ENCODE measurements at regions of chr1 and their contacts with region 1.

Region 1: DNA sequence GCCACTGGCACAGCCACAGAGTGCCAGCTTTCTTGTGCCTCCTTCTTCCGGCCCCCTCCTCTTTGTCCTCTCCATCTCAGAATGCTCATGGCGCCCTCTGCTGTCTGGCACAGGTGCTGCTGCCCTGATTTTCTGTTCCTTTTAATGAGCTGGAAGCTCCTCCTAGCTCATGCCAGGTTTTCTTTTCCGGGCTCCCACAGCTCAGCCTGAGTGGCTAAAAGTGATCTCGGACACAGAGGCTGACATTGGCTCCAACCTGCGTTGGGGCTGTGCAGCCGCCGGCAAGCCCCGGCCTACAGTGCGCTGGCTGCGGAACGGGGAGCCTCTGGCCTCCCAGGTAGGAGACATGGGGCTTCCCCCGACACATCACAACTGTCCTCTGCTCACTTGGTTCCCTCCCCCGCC is 18.7 kb downstream of the CNTN2 start:
- DNase-seq: peak; percentile 82
- H3K4me3 Mint-ChIP-seq: no peak overlapping the region
- H3K27ac Mint-ChIP-seq: no peak overlapping the region
- H3K4me1 Mint-ChIP-seq: no peaks in the 10 kb centered on the region
- H3K27me3 Mint-ChIP-seq: no peaks in the 10 kb centered on the region

Region 2: GRCh38 chr1:204975570-204976235 is 86.0 kb before region 1 on chr1:
- CTCF ChIA-PET with region 1: interaction called, 80 read pairs
- POLR2A ChIA-PET with region 1: no interaction called
- intact Hi-C with region 1: no loop called
- DNase-seq: peak; percentile 61
- H3K4me3 Mint-ChIP-seq: no peak overlapping the region
- H3K27ac Mint-ChIP-seq: no peak overlapping the region
- H3K4me1 Mint-ChIP-seq: no peaks in the 10 kb centered on the region
- H3K27me3 Mint-ChIP-seq: peaks cover 5% of the 10 kb centered on the region

Region 3: DNA sequence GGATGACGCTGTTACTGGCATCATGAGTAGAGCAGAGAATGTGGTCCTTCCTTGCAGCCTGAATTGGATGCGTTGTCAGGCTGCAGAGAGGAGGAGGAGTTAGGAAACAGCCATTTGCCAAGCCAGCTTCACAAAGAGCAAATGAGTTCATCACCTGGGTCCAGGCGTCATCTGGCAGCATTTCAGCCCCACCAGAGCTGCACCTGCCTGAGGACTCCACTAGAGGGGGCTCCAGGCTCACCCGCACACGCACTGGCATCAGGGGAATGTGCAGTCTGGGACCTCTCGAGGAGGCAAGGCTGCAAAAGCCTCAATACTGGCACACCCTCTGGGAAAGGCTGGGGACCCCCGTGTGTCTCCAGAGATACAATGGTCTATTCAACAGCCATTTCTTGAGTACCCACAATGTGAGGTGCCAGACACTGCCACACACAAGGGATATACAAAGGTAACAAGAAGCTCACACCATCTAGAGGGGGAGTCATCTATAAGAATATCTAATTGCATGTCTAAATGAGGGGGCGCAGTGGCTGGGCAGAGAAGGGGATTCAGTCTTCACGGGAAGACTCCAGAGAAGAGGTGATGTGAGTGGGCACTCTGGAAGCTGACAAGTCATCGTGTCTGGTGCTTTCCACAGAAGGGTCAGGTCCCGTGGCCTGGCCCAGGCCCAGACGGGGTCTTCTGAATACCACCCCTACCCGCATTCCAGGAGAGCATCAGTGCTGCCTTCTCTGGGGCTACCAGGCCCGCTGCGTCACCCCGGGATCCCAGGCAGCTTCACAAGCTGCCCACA is 72.2 kb before region 1 on chr1:
- CTCF ChIA-PET with region 1: interaction called, 107 read pairs
- POLR2A ChIA-PET with region 1: no interaction called
- intact Hi-C with region 1: loop called (anchors 1 kb)
- DNase-seq: peak; percentile 75
- H3K4me3 Mint-ChIP-seq: no peak overlapping the region
- H3K27ac Mint-ChIP-seq: no peak overlapping the region
- H3K4me1 Mint-ChIP-seq: peaks cover 7% of the 10 kb centered on the region
- H3K27me3 Mint-ChIP-seq: peaks cover 2% of the 10 kb centered on the region

Region 4: DNA sequence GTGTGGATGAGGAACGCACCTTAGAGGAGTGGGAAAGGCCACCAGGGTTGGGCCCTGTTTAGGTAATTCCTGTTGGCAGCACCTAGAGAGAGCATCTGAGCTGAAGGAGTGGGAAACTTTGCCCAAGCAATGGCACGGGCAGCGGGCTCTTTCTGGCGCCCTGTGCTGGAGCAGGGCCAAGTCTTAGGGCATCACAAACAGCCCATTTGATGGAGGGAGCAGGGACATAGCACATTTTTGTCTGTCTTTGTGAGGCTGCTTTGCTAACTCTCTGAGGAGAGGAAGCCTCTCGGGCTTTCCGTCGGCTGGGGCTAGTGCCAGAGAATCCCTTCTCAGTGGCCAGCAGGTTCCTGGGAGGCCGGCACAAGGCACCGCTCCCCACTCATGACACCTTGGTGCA is 41.2 kb before region 1 on chr1:
- CTCF ChIA-PET with region 1: interaction called, 15 read pairs
- POLR2A ChIA-PET with region 1: no interaction called
- intact Hi-C with region 1: no loop called
- DNase-seq: no peak
- H3K4me3 Mint-ChIP-seq: no peak overlapping the region
- H3K27ac Mint-ChIP-seq: no peak overlapping the region
- H3K4me1 Mint-ChIP-seq: no peaks in the 10 kb centered on the region
- H3K27me3 Mint-ChIP-seq: peaks cover 2% of the 10 kb centered on the region

Region 5: DNA sequence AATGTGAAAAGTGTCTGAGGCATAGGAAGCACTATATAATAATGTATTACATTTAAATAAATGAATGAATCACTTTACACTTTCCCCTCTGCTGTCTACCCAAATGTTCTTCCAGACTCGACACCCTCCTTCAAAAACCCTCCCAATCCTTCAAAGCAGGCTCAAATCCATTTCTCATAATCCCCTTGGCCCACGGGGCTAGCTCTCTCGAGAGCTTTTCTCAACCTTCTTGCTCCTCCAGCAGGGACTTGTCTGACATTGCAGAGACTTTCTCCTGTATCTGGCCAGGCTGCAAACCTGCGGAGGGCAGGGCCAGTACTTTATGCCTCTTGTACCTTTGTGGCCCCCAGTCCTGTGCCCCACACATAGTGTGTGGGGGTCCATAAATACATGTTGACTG is 32.7 kb before region 1 on chr1:
- CTCF ChIA-PET with region 1: interaction called, 12 read pairs
- POLR2A ChIA-PET with region 1: no interaction called
- intact Hi-C with region 1: no loop called
- DNase-seq: no peak
- H3K4me3 Mint-ChIP-seq: no peak overlapping the region
- H3K27ac Mint-ChIP-seq: no peak overlapping the region
- H3K4me1 Mint-ChIP-seq: no peaks in the 10 kb centered on the region
- H3K27me3 Mint-ChIP-seq: peaks cover 4% of the 10 kb centered on the region

Region 6: GRCh38 chr1:205048382-205048781 is 13.3 kb before region 1 on chr1:
- CTCF ChIA-PET with region 1: interaction called, 14 read pairs
- POLR2A ChIA-PET with region 1: no interaction called
- intact Hi-C with region 1: no loop called
- DNase-seq: no peak
- H3K4me3 Mint-ChIP-seq: no peak overlapping the region
- H3K27ac Mint-ChIP-seq: no peak overlapping the region
- H3K4me1 Mint-ChIP-seq: no peaks in the 10 kb centered on the region
- H3K27me3 Mint-ChIP-seq: peaks cover 23% of the 10 kb centered on the region

Region 7: GRCh38 chr1:205141236-205142101 is 79.8 kb after region 1 on chr1:
- CTCF ChIA-PET with region 1: interaction called, 17 read pairs
- POLR2A ChIA-PET with region 1: interaction called, 3 read pairs
- intact Hi-C with region 1: no loop called
- DNase-seq: peak; percentile 83
- H3K4me3 Mint-ChIP-seq: no peak overlapping the region
- H3K27ac Mint-ChIP-seq: no peak overlapping the region
- H3K4me1 Mint-ChIP-seq: peaks cover 4% of the 10 kb centered on the region
- H3K27me3 Mint-ChIP-seq: no peaks in the 10 kb centered on the region

Region 8: GRCh38 chr1:206513312-206514111 is 1451.8 kb after region 1 on chr1:
- CTCF ChIA-PET with region 1: no interaction called
- POLR2A ChIA-PET with region 1: no interaction called
- intact Hi-C with region 1: no loop called
- DNase-seq: no peak
- H3K4me3 Mint-ChIP-seq: no peak overlapping the region
- H3K27ac Mint-ChIP-seq: no peak overlapping the region
- H3K4me1 Mint-ChIP-seq: peaks cover 6% of the 10 kb centered on the region
- H3K27me3 Mint-ChIP-seq: peaks cover 19% of the 10 kb centered on the region